RWPE1 (cell line): ENCODE measurements at regions of chr19 and their contacts with region 1.

Region 1: DNA sequence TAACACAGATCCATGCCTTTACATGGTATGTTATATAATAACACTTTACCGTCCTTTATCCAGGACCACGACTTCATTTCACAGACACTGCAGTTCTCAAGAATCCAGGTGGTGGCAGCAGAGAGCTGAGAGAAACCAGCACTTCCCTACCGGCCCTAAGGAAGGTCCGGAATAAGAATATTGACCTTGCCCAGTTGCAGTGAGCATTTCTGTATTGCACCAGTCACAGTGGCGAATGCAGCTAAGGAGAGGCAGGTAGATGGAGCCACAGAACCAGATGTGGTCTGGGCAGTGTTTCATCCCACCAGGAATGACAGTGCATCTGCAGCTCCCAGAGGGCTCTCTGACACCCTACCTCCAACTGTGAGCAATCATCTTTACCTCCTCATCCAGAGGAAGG is 44.6 kb downstream of the ZNF787 start:
- DNase-seq: peak; percentile 45
- H3K27ac ChIP-seq: no peak overlapping the region
- CTCF ChIP-seq: peak; percentile 88

Region 2: GRCh38 chr19:56066152-56067023 is 10.1 kb before region 1 on chr19:
- CTCF ChIA-PET with region 1: interaction called, 12 read pairs
- POLR2A ChIA-PET with region 1: no interaction called
- DNase-seq: peak; percentile 74
- H3K27ac ChIP-seq: no peak overlapping the region
- CTCF ChIP-seq: peak; percentile 86

Region 3: GRCh38 chr19:56108447-56109195 is 32.1 kb after region 1 on chr19:
- CTCF ChIA-PET with region 1: interaction called, 11 read pairs
- POLR2A ChIA-PET with region 1: no interaction called
- DNase-seq: no peak
- H3K27ac ChIP-seq: peak overlapping the region; percentile 58
- CTCF ChIP-seq: no peak

Region 4: GRCh38 chr19:56170261-56170660 is 93.8 kb after region 1 on chr19:
- CTCF ChIA-PET with region 1: interaction called, 14 read pairs
- POLR2A ChIA-PET with region 1: no interaction called
- DNase-seq: peak; percentile 70
- H3K27ac ChIP-seq: no peak overlapping the region
- CTCF ChIP-seq: no peak

Region 5: DNA sequence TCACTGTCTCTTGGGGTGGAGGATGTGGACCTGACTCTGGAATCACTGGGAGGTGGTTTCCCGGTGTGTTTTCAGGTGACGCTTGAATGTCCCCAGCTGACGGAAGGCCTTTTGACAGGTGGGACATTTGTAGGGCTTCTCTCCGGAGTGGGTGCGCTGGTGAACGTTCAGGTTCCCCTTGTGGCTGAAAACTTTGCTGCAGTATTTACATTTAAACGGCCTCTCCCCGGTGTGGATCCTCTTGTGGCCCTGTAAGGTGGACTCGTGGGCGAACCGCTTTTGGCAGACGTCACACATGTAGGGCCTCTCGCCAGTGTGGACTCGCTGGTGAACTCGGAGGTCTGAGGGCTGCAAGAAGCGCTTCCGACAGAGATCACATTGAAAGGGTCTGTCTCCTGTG is 113.3 kb after region 1 on chr19:
- CTCF ChIA-PET with region 1: no interaction called
- POLR2A ChIA-PET with region 1: no interaction called
- DNase-seq: no peak
- H3K27ac ChIP-seq: no peak overlapping the region
- CTCF ChIP-seq: no peak